ENCODE measurements at regions of chr16 and their contacts with region 1.

Region 1: GRCh38 chr16:70380861-70381603 is 34.3 kb downstream of the DDX19A start:
- DNase-seq: peak; percentile 91
- ATAC-seq: peak; percentile 94
- H3K4me3 ChIP-seq: peak overlapping the region; percentile 97
- H3K27ac ChIP-seq: peak overlapping the region; percentile 92
- H3K4me1 ChIP-seq: peaks cover 14% of the 10 kb centered on the region
- H3K27me3 ChIP-seq: no peaks in the 10 kb centered on the region
- CTCF ChIP-seq: peak; percentile 13 to 33 (median 32); a peak in 3 of 6 replicates
- EP300 ChIP-seq: no peak
- POLR2A ChIP-seq: peak; percentile 95
- RAD21 ChIP-seq: no peak

Region 2: DNA sequence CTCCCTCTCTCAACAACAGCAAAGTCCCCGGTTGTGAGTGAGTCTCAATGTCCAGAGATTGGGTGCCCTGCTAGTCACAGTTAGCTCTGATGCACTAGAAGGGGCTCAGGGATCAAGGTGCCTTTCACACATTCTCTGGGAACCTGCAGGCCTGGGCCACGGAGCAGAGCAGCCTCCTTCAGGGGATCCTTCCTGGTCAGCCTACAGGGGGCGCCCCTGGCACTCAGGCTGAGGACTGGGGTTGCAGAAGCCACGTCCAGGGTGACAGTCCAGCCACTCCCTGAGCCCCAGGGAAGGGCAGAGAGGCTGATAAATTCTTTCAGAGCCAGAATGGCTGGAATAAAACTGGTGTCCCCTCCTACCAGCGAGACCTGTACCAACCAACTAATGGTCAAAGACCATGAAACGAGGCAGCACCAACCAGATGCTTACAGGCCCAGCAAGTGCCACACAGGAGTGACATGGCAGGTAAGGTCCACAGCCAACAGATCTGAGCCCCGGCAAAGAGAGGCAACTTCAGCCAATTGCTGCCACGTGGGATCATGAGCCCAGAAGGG is 14.4 kb after region 1 on chr16:
- CTCF ChIA-PET with region 1: interaction called, 6 read pairs
- POLR2A ChIA-PET with region 1: interaction called, 6 read pairs
- RAD21 ChIA-PET with region 1: interaction called, 3 read pairs
- SMC1A ChIA-PET with region 1: interaction called, 10 read pairs
- in situ Hi-C with region 1: no loop called
- intact Hi-C with region 1: no loop called
- DNase-seq: no peak
- ATAC-seq: peak; percentile 98
- H3K4me3 ChIP-seq: no peak overlapping the region
- H3K27ac ChIP-seq: no peak overlapping the region
- H3K4me1 ChIP-seq: no peaks in the 10 kb centered on the region; the same call in 1 of the 2 replicates
- H3K27me3 ChIP-seq: no peaks in the 10 kb centered on the region
- CTCF ChIP-seq: peak; percentile 70 to 87 (median 82)
- EP300 ChIP-seq: no peak
- POLR2A ChIP-seq: peak; percentile 21
- RAD21 ChIP-seq: peak; percentile 83

Region 3: DNA sequence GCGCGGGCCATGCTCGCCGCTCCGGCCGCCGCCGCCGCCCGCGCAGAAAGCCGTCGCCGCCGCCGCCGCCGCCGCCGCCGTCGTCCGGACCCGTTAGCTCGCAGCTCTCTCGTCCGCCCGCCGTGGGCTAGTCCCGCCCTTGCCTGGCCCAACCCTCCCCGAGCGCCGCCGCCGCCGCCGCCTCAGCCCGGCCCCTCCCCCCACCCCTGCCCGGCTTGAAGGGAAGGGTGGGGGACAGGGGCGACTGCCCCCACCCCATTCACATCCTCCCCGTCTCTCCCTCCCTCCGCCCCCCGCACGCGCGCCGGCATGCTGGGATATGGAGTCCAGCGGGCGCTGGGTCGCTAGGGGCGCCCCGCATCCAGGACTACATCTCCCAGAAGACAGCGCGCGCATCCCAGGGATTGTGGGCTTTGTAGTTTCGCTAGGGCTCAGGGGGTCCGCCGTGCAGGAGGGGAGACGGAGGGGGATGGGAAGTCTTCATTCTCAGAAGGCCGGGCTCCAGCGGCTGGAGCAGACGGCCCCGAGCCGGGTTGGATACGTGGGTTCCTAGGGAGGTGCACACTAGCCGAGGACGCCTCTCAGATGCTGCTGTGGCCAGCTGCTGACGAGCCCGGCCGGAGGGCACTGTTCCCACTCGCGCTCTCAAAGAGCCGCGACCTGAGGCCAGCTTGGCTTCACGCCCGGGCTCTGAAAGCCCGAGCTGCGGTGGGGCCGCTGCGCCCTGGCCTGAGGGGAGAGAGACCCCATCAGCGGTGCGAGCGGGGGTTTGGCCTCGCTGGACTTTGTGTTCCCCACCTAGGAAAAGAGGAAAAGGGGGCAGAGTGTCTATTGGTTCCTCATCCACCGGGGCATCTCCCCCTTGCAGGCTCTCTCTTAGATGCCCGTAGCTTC is 58.2 kb after region 1 on chr16 and contains the start of gene ST3GAL2:
- CTCF ChIA-PET with region 1: interaction called, 5 read pairs
- POLR2A ChIA-PET with region 1: interaction called, 7 read pairs
- RAD21 ChIA-PET with region 1: interaction called, 11 read pairs
- SMC1A ChIA-PET with region 1: interaction called, 9 read pairs
- in situ Hi-C with region 1: no loop called
- intact Hi-C with region 1: loop called (anchors 2 kb)
- DNase-seq: peak; percentile 74
- ATAC-seq: peak; percentile 91
- H3K4me3 ChIP-seq: peak within 1 kb of the TSS; percentile 88
- H3K27ac ChIP-seq: peak within 1 kb of the TSS; percentile 71
- H3K4me1 ChIP-seq: peaks cover 20% of the 10 kb centered on the region
- H3K27me3 ChIP-seq: no peaks in the 10 kb centered on the region
- CTCF ChIP-seq: 0 out of 6 replicates have a peak, but pooled peaks of 1 of the 3 experiments have one; percentile 2
- EP300 ChIP-seq: no peak
- POLR2A ChIP-seq: peak; percentile 67
- RAD21 ChIP-seq: no peak
- polyA plus RNA-seq, gene ST3GAL2: 0.95 to 1.4 TPM

Region 4: DNA sequence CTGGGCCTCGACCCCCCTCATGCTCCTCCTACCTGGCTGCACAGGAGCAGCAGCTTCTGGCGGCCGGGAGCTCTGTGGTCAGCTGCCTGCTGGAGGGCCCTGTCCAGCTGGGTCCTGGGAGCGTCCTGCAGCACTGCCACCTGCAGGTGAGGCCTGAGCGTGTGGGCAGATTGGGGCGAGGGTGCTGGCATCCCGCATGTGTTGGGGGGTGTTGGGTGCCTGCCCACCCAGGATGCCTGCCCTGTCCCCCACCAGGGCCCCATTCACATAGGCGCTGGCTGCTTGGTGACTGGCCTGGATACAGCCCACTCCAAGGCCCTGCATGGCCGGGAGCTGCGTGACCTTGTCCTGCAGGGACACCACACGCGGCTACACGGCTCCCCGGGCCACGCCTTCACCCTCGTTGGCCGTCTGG is 89.9 kb after region 1 on chr16:
- CTCF ChIA-PET with region 1: interaction called, 4 read pairs
- POLR2A ChIA-PET with region 1: interaction called, 5 read pairs
- RAD21 ChIA-PET with region 1: interaction called, 13 read pairs
- SMC1A ChIA-PET with region 1: interaction called, 11 read pairs
- in situ Hi-C with region 1: loop called (anchors 5 kb)
- intact Hi-C with region 1: loop called (anchors 2 kb)
- DNase-seq: no peak
- ATAC-seq: peak; percentile 26; the same call in 2 of the 3 replicates
- H3K4me3 ChIP-seq: no peak overlapping the region
- H3K27ac ChIP-seq: no peak overlapping the region
- H3K4me1 ChIP-seq: peaks cover 9% of the 10 kb centered on the region
- H3K27me3 ChIP-seq: no peaks in the 10 kb centered on the region
- CTCF ChIP-seq: peak in 2 of 3 experiments; percentile 11 to 26; a peak in 1 of 6 replicates
- EP300 ChIP-seq: no peak
- POLR2A ChIP-seq: 0 out of 2 replicates have a peak, but pooled peaks have one; percentile 15
- RAD21 ChIP-seq: peak; percentile 18; the same call in 1 of the 2 replicates

Region 5: GRCh38 chr16:70523076-70523742 is 142.2 kb after region 1 on chr16 and contains the start of gene COG4:
- CTCF ChIA-PET with region 1: interaction called, 3 read pairs
- POLR2A ChIA-PET with region 1: interaction called, 5 read pairs
- RAD21 ChIA-PET with region 1: interaction called, 25 read pairs
- SMC1A ChIA-PET with region 1: interaction called, 6 read pairs
- in situ Hi-C with region 1: no loop called
- intact Hi-C with region 1: loop called (anchors 2 kb)
- DNase-seq: peak; percentile 58
- ATAC-seq: peak; percentile 67
- H3K4me3 ChIP-seq: peak within 1 kb of the TSS; percentile 86
- H3K27ac ChIP-seq: peak within 1 kb of the TSS; percentile 99
- H3K4me1 ChIP-seq: peaks cover 14% of the 10 kb centered on the region
- H3K27me3 ChIP-seq: no peaks in the 10 kb centered on the region
- CTCF ChIP-seq: no peak
- EP300 ChIP-seq: no peak
- POLR2A ChIP-seq: peak; percentile 93
- RAD21 ChIP-seq: no peak
- polyA plus RNA-seq, gene COG4: 7.0 to 8.9 TPM

Region 6: GRCh38 chr16:71467810-71468209 is 1086.8 kb after region 1 on chr16:
- CTCF ChIA-PET with region 1: no interaction called
- POLR2A ChIA-PET with region 1: no interaction called
- RAD21 ChIA-PET with region 1: no interaction called
- SMC1A ChIA-PET with region 1: no interaction called
- in situ Hi-C with region 1: no loop called
- intact Hi-C with region 1: no loop called
- DNase-seq: no peak
- ATAC-seq: peak; percentile 56
- H3K4me3 ChIP-seq: no peak overlapping the region
- H3K27ac ChIP-seq: no peak overlapping the region
- H3K4me1 ChIP-seq: no peaks in the 10 kb centered on the region
- H3K27me3 ChIP-seq: no peaks in the 10 kb centered on the region
- CTCF ChIP-seq: no peak
- EP300 ChIP-seq: no peak
- POLR2A ChIP-seq: no peak
- RAD21 ChIP-seq: no peak

Measured in GM12878 (cell line).